A549 (cell line): ENCODE measurements at regions of chr9 and their contacts with region 1.

Region 1: GRCh38 chr9:114653556-114654159 is 3.9 kb downstream of the TEX53 start:
- DNase-seq: peak; percentile 64 to 72
- ATAC-seq: peak; percentile 62 to 88; a peak in 3 of 6 replicates
- H3K4me3 ChIP-seq: no peak overlapping the region
- H3K27ac ChIP-seq: peak overlapping the region in 1 of 2 experiments; percentile 43; a peak in 2 of 6 replicates
- H3K4me1 ChIP-seq: 0 out of 3 replicates have a peak, but pooled peaks cover 3% of the 10 kb centered on the region
- CTCF ChIP-seq: peak; percentile 91
- EP300 ChIP-seq: no peak
- POLR2A ChIP-seq: no peak
- RAD21 ChIP-seq: peak; percentile 89 to 97

Region 2: DNA sequence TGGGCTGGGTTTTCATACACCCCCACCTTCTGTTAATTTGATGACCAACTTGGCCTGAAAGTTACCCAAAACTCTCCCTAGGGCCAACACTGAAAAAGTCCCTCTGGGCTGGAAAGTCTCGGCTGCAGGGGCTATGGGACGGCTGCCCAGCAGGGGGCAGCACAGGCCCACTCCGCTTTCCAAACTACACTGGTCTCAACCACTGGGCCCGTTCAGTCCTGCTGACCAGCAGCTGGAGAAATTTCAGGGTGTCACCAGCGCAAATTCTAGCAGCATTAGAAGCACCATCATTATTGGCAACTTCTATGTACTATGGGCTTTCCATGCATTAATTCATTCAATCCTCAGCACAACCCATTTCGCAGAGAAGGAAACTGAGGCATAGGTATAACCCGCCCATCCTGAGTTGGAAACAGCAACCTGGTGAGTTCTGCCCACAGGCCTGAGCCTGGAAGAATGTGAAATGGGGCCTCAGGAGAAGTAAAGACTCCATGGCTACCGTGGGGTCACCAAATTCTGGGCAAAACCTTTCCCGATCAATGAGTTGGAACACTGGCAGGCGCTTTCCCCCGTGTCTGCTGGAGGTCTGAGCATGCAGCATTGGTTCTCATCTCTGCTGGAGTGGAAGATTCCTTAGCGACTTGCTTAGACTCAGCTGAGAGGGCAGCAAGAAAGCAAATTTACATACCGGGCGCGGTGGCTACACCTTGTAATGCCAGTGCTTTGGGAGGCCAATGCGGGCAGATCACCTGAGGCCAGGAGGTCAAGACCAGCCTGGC is 314.3 kb before region 1 on chr9:
- CTCF ChIA-PET with region 1: interaction called, 11 read pairs
- POLR2A ChIA-PET with region 1: no interaction called
- DNase-seq: peak; percentile 44 to 84
- ATAC-seq: peak; percentile 73 to 93
- H3K4me3 ChIP-seq: no peak overlapping the region
- H3K27ac ChIP-seq: no peak overlapping the region
- H3K4me1 ChIP-seq: no peaks in the 10 kb centered on the region
- CTCF ChIP-seq: peak; percentile 77
- EP300 ChIP-seq: no peak
- POLR2A ChIP-seq: no peak
- RAD21 ChIP-seq: peak; percentile 80 to 82

Region 3: GRCh38 chr9:114434878-114435311 is 218.8 kb before region 1 on chr9:
- CTCF ChIA-PET with region 1: interaction called, 202 read pairs
- POLR2A ChIA-PET with region 1: interaction called, 3 read pairs
- DNase-seq: peak; percentile 47 to 63
- ATAC-seq: peak; percentile 77 to 91; a peak in 5 of 6 replicates
- H3K4me3 ChIP-seq: no peak overlapping the region
- H3K27ac ChIP-seq: no peak overlapping the region
- H3K4me1 ChIP-seq: no peaks in the 10 kb centered on the region
- CTCF ChIP-seq: peak; percentile 66
- EP300 ChIP-seq: no peak
- POLR2A ChIP-seq: no peak
- RAD21 ChIP-seq: peak; percentile 78 to 87

Region 4: DNA sequence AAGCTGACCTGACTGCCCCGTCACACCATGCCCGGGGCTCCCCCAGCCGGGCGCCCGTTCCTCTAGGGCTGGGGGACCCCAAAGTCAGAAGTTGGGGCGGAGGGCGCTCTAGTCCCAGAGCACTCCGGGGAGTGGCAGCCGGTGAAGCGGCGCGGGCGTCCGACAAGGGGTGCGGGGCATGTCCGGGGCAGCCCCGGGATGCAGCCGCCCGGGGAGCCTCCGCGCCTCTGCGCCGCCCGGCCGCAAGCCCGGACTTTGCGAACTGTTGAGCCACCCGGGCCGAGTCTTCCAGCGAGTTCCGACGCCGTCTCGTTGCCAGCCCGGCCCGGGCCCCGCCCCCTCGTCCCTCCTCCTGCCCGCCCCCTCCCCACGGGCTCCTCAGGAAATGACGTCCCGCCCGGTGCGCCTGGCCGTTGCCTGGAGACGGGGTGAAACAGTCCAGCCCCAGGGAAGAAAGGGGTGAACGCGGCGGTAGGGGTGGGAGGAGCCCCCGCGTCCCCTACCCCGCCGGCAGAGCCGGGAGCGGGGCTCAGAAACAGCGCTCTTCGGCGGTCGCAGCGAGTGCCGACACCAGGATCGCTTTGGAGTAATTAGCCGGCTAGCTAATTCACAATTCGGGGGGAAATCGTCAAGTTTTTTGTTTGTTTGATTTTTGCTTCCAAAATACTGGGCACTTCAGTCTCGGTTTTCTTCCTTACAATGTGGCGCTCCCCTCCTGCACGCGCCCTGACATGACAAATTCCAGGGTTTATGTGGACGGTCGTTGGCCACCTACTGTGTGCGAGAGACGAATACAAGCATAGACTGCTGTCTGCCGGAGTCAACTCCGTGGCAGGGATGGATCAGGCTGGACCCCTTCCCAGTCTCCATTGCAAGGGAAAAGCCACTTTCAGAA is 148.2 kb before region 1 on chr9 and contains the start of gene WHRN:
- CTCF ChIA-PET with region 1: interaction called, 17 read pairs
- POLR2A ChIA-PET with region 1: no interaction called
- DNase-seq: peak; percentile 84 to 96
- ATAC-seq: peak; percentile 80 to 86
- H3K4me3 ChIP-seq: peak within 1 kb of the TSS; percentile 77
- H3K27ac ChIP-seq: peak within 1 kb of the TSS; percentile 65 to 88
- H3K4me1 ChIP-seq: peaks cover 27% of the 10 kb centered on the region
- CTCF ChIP-seq: no peak
- EP300 ChIP-seq: no peak
- POLR2A ChIP-seq: peak; percentile 47
- RAD21 ChIP-seq: 0 out of 5 replicates have a peak, but pooled peaks of 1 of the 2 experiments have one; percentile 10
- polyA plus RNA-seq, gene WHRN: 1.2 and 1.5 TPM in 2 replicates

Region 5: DNA sequence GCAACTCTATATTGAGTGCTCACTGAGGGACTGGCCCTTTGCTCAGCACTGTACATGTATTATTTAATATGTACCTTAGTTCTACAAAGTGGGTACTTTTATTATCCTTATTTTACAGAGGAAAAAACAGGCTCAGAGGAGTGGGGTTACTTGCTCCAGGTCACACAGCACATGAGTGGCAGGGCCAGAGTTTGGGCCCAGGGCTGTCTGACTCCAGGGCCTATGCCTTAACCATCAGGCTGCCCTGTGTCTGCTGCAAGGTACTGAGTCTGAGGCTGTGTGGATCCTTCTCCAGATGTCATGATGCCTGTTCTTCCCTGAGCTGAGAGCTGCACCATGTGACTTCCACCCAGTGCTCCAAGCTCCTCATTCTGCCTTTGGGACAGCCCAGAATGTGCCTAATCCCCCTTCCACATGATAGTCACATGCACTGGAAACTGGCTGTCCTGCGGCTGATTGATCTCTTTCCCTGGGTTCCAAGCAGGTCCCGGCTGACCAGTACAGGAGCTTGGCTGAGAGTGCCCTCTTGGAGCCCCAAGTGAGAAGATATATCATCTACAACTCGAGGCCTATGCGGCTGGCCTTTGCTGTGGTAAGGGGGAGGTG is 27.1 kb before region 1 on chr9:
- CTCF ChIA-PET with region 1: interaction called, 27 read pairs
- POLR2A ChIA-PET with region 1: no interaction called
- DNase-seq: no peak
- ATAC-seq: no peak
- H3K4me3 ChIP-seq: no peak overlapping the region
- H3K27ac ChIP-seq: no peak overlapping the region
- H3K4me1 ChIP-seq: peaks cover 11% of the 10 kb centered on the region
- CTCF ChIP-seq: no peak
- EP300 ChIP-seq: no peak
- POLR2A ChIP-seq: no peak
- RAD21 ChIP-seq: no peak

Region 6: GRCh38 chr9:114641967-114642366 is 11.7 kb before region 1 on chr9:
- CTCF ChIA-PET with region 1: interaction called, 22 read pairs
- POLR2A ChIA-PET with region 1: no interaction called
- DNase-seq: no peak
- ATAC-seq: no peak
- H3K4me3 ChIP-seq: no peak overlapping the region
- H3K27ac ChIP-seq: no peak overlapping the region
- H3K4me1 ChIP-seq: no peaks in the 10 kb centered on the region
- CTCF ChIP-seq: no peak
- EP300 ChIP-seq: no peak
- POLR2A ChIP-seq: no peak
- RAD21 ChIP-seq: no peak

Region 7: GRCh38 chr9:114681594-114682332 is 28.1 kb after region 1 on chr9 and contains the start of gene TEX48:
- CTCF ChIA-PET with region 1: interaction called, 10 read pairs
- POLR2A ChIA-PET with region 1: no interaction called
- DNase-seq: peak; percentile 66 to 88
- ATAC-seq: peak; percentile 80 to 87
- H3K4me3 ChIP-seq: no peak within 1 kb of the TSS
- H3K27ac ChIP-seq: peak within 1 kb of the TSS; percentile 9 to 48; a peak in 3 of 6 replicates
- H3K4me1 ChIP-seq: peaks cover 32% of the 10 kb centered on the region
- CTCF ChIP-seq: peak; percentile 61
- EP300 ChIP-seq: no peak
- POLR2A ChIP-seq: no peak
- RAD21 ChIP-seq: peak; percentile 76 to 92
- polyA plus RNA-seq, gene TEX48: 0.16 TPM in 1 of 2 replicates, not detected in the other